Activated CD8-positive, alpha-beta T cell treated with anti-CD3 and anti-CD28 coated beads, Interleukin-2, amount 10 ng/mL, durations not matched to agents 7 days and 5 days (primary cell): ENCODE measurements at regions of chr10 and their contacts with region 1.

Region 1: GRCh38 chr10:100174699-100175677 is 10.8 kb downstream of the ERLIN1 start:
- DNase-seq: no peak
- ATAC-seq: peak; percentile 64
- H3K4me3 Mint-ChIP-seq: no peak overlapping the region
- H3K27ac Mint-ChIP-seq: peak overlapping the region; percentile 31
- H3K4me1 Mint-ChIP-seq: peaks cover 25% of the 10 kb centered on the region
- H3K27me3 Mint-ChIP-seq: no peaks in the 10 kb centered on the region

Region 2: GRCh38 chr10:100185364-100186252 is 10.6 kb after region 1 on chr10 and contains the start of gene ERLIN1:
- CTCF ChIA-PET with region 1: interaction called, 11 read pairs
- POLR2A ChIA-PET with region 1: interaction called, 10 read pairs
- DNase-seq: peak; percentile 92
- ATAC-seq: peak; percentile 95
- H3K4me3 Mint-ChIP-seq: peak within 1 kb of the TSS; percentile 94
- H3K27ac Mint-ChIP-seq: peak within 1 kb of the TSS; percentile 91
- H3K4me1 Mint-ChIP-seq: peaks cover 53% of the 10 kb centered on the region
- H3K27me3 Mint-ChIP-seq: no peaks in the 10 kb centered on the region
- total RNA-seq, gene ERLIN1: 14.9 to 17.0 TPM

Region 3: DNA sequence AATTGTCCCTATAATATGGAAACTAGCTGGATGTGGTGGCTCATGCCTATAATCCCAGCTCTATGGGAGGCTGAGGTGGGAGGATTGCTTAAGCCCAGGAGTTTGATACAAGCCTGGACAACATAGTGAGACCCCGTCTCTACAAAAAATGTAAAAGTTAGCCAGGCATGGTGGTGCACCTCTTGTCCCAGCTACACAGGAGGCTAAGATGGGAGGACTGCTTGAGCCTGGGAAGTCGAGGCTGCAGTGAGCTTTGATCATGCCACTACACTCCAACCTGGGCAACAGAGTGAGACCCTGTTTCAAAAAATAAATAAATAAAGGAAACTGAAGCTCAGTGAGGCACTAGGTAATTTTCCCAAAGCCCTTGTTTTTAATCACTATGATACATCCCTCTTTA is 26.6 kb after region 1 on chr10:
- CTCF ChIA-PET with region 1: no interaction called
- POLR2A ChIA-PET with region 1: no interaction called
- DNase-seq: no peak
- ATAC-seq: no peak
- H3K4me3 Mint-ChIP-seq: no peak overlapping the region
- H3K27ac Mint-ChIP-seq: no peak overlapping the region
- H3K4me1 Mint-ChIP-seq: no peaks in the 10 kb centered on the region
- H3K27me3 Mint-ChIP-seq: no peaks in the 10 kb centered on the region

Region 4: DNA sequence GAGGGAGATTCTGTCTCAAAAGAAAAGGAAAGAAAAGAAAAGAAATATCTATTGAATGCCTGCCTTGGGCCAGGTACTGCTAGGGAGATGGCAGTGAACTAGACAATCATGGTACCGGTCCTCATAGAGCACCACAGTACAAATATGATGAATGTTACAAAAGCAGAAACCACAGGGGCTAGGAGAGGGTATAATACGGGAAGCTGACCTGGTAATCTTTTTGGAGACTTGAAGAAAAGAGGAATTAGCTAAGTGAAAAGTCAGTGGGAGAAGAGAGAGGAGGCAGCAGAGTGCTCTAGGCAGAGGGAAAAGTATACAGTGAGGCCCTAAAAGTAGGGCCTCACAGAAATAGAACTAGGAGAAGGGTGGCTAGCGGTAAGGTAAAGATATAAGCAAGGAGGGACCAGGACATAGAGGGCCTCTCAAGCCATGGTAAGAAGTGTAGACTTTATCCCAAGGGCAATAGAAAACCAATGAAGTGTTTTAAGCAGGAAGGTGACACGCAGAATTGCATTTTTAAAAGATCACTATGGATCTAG is 245.0 kb after region 1 on chr10:
- CTCF ChIA-PET with region 1: no interaction called
- POLR2A ChIA-PET with region 1: no interaction called
- DNase-seq: no peak
- ATAC-seq: no peak
- H3K4me3 Mint-ChIP-seq: no peak overlapping the region
- H3K27ac Mint-ChIP-seq: no peak overlapping the region
- H3K4me1 Mint-ChIP-seq: no peaks in the 10 kb centered on the region
- H3K27me3 Mint-ChIP-seq: peaks cover 6% of the 10 kb centered on the region